Aorta (tissue), 5 donors: ENCODE measurements at regions of chr18 and their contacts with region 1.

Region 1: GRCh38 chr18:22800551-22800951 is 132.6 kb upstream of the RBBP8 start:
- DNase-seq: peak; percentile 60 to 75
- ATAC-seq: peak; percentile 86
- H3K4me3 ChIP-seq: no peak overlapping the region
- H3K27ac ChIP-seq: no peak overlapping the region
- H3K4me1 ChIP-seq: no peaks in the 10 kb centered on the region
- H3K27me3 ChIP-seq: no peaks in the 10 kb centered on the region

Region 2: DNA sequence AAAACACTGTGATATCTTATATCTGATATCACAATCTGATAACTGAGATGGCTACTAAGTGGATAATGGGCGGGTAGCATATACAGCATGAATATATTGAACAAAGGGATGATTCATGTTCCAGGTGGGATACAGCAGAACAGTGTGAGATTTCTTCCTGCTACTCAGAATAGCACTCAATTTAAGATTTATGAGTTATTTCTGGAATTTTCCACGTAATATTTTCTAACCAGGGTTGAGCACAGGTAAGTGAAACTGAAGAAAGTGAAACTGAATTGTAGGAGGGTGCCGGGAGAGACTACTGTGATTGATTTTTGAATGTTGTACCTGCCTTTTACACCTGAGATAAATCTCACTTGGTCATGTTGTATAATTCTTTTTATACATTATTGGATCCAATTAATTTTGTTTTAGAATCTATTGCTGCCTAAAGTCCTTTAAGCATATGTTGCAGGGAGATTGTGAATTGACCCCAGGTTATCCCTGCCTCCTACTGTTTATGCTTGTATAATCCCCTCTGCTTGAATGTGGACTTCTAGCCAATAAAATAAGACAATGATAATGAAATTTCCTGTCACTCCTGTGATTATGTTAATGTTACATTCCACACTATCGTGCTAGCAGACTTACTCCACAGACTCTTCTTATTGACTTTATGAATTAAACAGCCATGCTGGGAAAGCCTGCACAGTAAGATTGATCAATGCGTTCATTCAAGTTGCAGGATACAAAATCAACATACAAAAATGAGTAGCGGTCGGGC is 65.0 kb after region 1 on chr18:
- intact Hi-C with region 1: loop called in 1 of 2 experiments (anchors 10 kb)
- DNase-seq: no peak
- ATAC-seq: no peak
- H3K4me3 ChIP-seq: no peak overlapping the region
- H3K27ac ChIP-seq: no peak overlapping the region
- H3K4me1 ChIP-seq: no peaks in the 10 kb centered on the region
- H3K27me3 ChIP-seq: no peaks in the 10 kb centered on the region

Region 3: GRCh38 chr18:22983175-22983574 is 182.6 kb after region 1 on chr18:
- intact Hi-C with region 1: loop called in 1 of 2 experiments (anchors 5 kb)
- DNase-seq: no peak
- ATAC-seq: no peak
- H3K4me3 ChIP-seq: no peak overlapping the region
- H3K27ac ChIP-seq: no peak overlapping the region
- H3K4me1 ChIP-seq: no peaks in the 10 kb centered on the region
- H3K27me3 ChIP-seq: no peaks in the 10 kb centered on the region